ENCODE measurements at regions of chr7 and their contacts with region 1.

Region 1: DNA sequence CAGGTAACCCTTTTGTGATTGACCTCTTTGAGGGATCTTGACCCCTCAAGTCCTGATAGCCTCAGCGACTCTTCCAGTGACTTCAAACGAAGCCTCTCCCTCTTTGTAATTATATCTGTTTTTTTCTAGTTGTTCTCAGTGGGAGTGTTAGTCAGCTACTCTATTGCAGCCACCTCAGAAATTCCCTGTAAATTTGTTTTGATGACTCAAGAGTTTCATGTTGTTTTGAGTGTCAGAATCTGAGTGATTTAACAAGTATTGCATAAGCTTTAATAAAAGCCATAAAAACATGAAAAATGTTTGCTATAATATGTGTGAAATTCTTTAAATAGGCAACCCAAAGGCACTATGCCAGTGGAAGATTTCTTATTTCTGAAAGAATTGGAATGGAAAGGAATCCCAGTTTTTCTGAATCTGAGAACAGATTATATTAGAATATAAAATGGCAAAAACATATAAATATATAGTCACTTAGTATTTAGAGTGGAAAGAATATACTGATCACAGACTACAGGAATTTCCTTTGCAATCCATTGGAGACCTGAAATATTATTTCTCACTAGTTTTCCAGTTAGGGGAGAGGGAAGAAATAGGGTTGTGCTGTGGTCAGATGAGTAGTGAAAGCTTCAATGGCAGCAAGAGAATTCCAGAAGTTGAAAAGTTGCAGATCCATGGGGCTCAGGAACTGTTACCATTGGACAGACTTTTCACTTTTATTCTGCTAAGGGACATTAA is 94.4 kb upstream of the SEMA3C start:
- DNase-seq: peak; percentile 88
- H3K4me3 Mint-ChIP-seq: peak overlapping the region; percentile 15
- H3K27ac Mint-ChIP-seq: peak overlapping the region; percentile 94
- H3K4me1 Mint-ChIP-seq: peaks cover 7% of the 10 kb centered on the region
- H3K27me3 Mint-ChIP-seq: no peaks in the 10 kb centered on the region
- CTCF ChIP-seq: no peak

Region 2: GRCh38 chr7:81075150-81075549 is 61.9 kb after region 1 on chr7:
- CTCF ChIA-PET with region 1: no interaction called
- POLR2A ChIA-PET with region 1: interaction called, 23 read pairs
- intact Hi-C with region 1: loop called (anchors 1 kb)
- DNase-seq: peak; percentile 66
- H3K4me3 Mint-ChIP-seq: no peak overlapping the region
- H3K27ac Mint-ChIP-seq: peak overlapping the region; percentile 93
- H3K4me1 Mint-ChIP-seq: peaks cover 23% of the 10 kb centered on the region
- H3K27me3 Mint-ChIP-seq: no peaks in the 10 kb centered on the region
- CTCF ChIP-seq: no peak